Prostate gland (tissue), 2 donors: ENCODE measurements at regions of chr19 and their contacts with region 1.

Region 1: DNA sequence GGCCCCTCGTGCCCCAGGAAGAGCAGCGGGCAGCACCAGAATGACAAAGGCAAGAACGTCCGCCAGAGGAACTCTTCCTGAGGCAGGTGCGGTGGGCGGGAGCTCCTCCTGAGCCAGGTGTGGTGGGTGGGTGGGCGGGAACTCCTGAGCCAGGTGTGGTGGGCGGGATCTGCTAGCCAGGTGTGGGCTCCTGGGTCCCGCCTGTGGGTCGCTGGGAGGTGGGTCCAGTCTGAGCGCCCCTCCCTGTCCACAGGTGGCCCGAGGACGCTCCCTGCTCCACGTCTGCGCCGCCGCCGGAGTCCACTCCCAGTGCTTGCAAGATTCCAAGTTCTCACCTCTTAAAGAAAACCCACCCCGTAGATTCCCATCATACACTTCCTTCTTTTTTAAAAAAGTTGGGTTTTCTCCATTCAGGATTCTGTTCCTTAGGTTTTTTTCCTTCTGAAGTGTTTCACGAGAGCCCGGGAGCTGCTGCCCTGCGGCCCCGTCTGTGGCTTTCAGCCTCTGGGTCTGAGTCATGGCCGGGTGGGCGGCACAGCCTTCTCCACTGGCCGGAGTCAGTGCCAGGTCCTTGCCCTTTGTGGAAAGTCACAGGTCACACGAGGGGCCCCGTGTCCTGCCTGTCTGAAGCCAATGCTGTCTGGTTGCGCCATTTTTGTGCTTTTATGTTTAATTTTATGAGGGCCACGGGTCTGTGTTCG is 7.0 kb upstream of the HCN2 start:
- DNase-seq: no peak
- H3K4me3 ChIP-seq: no peak overlapping the region
- H3K27ac ChIP-seq: no peak overlapping the region
- H3K4me1 ChIP-seq: no peaks in the 10 kb centered on the region
- H3K27me3 ChIP-seq: no peaks in the 10 kb centered on the region
- CTCF ChIP-seq: no peak
- POLR2A ChIP-seq: no peak

Region 2: GRCh38 chr19:645641-646478 is 63.2 kb after region 1 on chr19:
- intact Hi-C with region 1: loop called (anchors 2 kb)
- DNase-seq: no peak
- H3K4me3 ChIP-seq: no peak overlapping the region
- H3K27ac ChIP-seq: no peak overlapping the region
- H3K4me1 ChIP-seq: no peaks in the 10 kb centered on the region
- H3K27me3 ChIP-seq: no peaks in the 10 kb centered on the region
- CTCF ChIP-seq: no peak
- POLR2A ChIP-seq: no peak